IMR-90 (cell line): ENCODE measurements at regions of chr12 and their contacts with region 1.

Region 1: DNA sequence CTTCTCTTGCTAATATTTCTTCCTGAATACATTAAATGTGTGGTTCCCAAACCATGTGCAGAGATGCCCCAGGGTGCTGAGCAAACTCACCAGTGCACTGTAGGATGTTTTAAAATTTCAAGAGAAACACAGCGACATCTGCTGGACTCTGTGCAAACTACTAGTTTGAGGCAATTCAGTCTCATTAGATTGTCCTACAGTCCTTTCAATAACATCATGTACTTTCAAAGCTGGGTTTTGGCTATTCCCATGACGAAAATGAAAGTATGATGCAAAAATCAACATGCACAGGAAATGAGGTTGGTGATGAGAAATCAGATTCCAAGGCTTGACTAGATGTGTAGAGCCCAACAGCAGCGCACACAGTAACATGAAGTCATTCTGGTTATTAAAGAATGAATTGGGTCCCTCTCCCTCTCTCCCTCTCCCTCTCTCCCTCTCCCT is 66.3 kb downstream of the CLIP1 start:
- DNase-seq: peak; percentile 78
- ATAC-seq: peak; percentile 99
- H3K4me3 ChIP-seq: no peak overlapping the region
- H3K27ac ChIP-seq: no peak overlapping the region
- H3K4me1 ChIP-seq: no peaks in the 10 kb centered on the region
- H3K27me3 ChIP-seq: no peaks in the 10 kb centered on the region
- CTCF ChIP-seq: peak; percentile 66
- POLR2A ChIP-seq: no peak
- RAD21 ChIP-seq: peak; percentile 47

Region 2: DNA sequence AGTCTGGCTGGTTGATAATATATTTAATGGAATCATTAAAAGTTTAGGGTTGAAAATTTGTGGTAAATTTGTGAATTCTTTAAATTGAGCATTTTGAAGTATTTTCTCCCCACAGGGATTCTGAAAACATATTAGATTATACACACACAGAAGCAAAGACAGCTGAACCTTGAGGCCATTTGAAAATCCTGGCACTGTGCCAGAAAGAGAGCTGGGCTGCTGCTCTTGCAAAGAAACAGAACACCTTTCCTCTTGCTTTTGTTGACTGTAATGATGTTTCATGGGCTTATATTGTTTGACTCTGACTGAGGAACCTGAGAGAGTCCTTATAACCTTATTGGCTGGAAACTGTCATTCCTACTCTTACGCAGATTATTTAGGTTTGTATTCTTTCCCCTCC is 951.5 kb before region 1 on chr12:
- CTCF ChIA-PET with region 1: no interaction called
- POLR2A ChIA-PET with region 1: interaction called, 14 read pairs
- dilution Hi-C with region 1: no loop called
- in situ Hi-C with region 1: no loop called
- intact Hi-C with region 1: no loop called
- DNase-seq: no peak
- ATAC-seq: no peak
- H3K4me3 ChIP-seq: no peak overlapping the region
- H3K27ac ChIP-seq: no peak overlapping the region
- H3K4me1 ChIP-seq: no peaks in the 10 kb centered on the region; the same call in 1 of the 2 replicates
- H3K27me3 ChIP-seq: no peaks in the 10 kb centered on the region
- CTCF ChIP-seq: no peak
- POLR2A ChIP-seq: no peak
- RAD21 ChIP-seq: no peak

Region 3: DNA sequence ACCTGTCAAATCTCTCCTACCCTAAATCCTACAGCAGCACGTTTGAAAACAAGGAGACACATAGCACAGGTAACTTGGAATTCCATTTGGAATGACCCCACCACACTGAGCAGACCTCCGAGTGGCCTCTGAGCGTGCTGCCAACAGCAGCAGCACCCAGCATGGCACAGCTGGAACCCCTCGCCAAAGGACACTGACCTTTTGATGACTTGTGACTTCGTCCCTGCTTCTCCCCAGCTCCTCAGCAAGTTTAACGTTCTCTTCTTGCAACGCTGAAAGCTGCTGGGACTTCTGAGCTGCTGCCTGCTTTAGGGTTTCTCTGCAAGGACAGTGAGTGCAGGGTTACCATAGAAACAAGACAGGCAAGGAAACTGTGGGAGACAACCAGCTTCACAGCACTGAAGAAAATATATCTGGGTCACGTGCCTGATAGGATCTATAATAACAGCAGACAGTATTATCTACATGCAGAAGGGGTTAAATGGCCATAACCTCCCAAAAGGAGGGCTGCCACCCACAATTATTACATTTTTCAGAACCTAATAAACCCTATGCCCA is 46.6 kb before region 1 on chr12:
- CTCF ChIA-PET with region 1: no interaction called
- POLR2A ChIA-PET with region 1: no interaction called
- dilution Hi-C with region 1: no loop called
- in situ Hi-C with region 1: no loop called
- intact Hi-C with region 1: no loop called
- DNase-seq: peak; percentile 31
- ATAC-seq: peak; percentile 18; the same call in 1 of the 2 replicates
- H3K4me3 ChIP-seq: no peak overlapping the region
- H3K27ac ChIP-seq: peak overlapping the region; percentile 59; the same call in 1 of the 2 replicates
- H3K4me1 ChIP-seq: peaks cover 11% of the 10 kb centered on the region
- H3K27me3 ChIP-seq: no peaks in the 10 kb centered on the region
- CTCF ChIP-seq: no peak
- POLR2A ChIP-seq: no peak
- RAD21 ChIP-seq: no peak

Region 4: DNA sequence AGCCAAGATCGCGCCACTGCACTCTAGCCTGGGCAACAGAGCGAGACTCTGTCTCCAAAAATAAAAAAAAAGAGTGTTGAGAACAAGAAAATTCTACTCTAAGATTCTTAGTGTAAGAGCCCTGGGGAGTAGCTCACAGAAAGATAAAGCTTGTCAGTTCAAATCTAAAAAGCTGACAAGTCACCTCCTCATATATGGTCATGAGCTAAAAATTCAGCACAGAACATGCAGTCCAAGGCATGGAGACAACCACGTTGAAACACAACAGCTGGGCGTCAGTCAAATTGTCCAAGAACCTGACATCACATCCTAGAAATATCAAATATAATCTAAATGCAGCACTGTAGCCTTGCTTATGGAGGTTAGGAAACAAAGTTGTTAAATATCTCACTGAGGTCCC is 18.5 kb after region 1 on chr12:
- CTCF ChIA-PET with region 1: interaction called, 11 read pairs
- POLR2A ChIA-PET with region 1: no interaction called
- dilution Hi-C with region 1: no loop called
- in situ Hi-C with region 1: no loop called
- intact Hi-C with region 1: no loop called
- DNase-seq: no peak
- ATAC-seq: no peak
- H3K4me3 ChIP-seq: no peak overlapping the region
- H3K27ac ChIP-seq: no peak overlapping the region
- H3K4me1 ChIP-seq: no peaks in the 10 kb centered on the region
- H3K27me3 ChIP-seq: no peaks in the 10 kb centered on the region
- CTCF ChIP-seq: no peak
- POLR2A ChIP-seq: no peak
- RAD21 ChIP-seq: no peak